ENCODE measurements at regions of chr19 and their contacts with region 1.

Region 1: DNA sequence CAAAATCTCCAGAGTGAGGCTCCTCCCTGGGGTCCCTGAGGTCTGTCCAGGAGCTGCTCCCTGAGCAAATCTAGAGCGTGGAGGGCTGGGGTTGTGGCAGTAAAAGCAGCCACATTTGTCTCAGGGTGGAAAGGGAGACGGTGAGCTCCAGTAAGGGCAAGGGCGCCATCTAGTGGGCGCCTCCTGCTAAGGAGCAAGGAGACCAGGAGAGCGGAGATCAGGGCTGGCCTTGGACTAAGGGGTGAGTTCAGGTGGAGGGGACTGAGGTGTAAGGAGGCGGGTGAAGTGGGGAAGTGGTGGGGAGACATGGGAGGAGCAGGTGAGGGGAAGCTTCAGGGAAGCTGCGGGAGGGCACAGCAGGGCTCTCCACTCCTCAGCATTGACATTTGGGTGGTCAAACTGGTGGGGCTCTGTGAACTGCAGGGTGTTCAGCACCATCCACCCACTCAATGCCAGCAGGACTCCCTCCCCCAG is 5.3 kb upstream of the CEACAM21 start:
- DNase-seq: peak; percentile 66 to 75
- H3K4me3 ChIP-seq: no peak overlapping the region
- H3K27ac ChIP-seq: no peak overlapping the region
- H3K4me1 ChIP-seq: no peaks in the 10 kb centered on the region
- H3K27me3 ChIP-seq: peaks cover 12% of the 10 kb centered on the region
- CTCF ChIP-seq: peak; percentile 50 to 87 (median 68)
- POLR2A ChIP-seq: no peak

Region 2: DNA sequence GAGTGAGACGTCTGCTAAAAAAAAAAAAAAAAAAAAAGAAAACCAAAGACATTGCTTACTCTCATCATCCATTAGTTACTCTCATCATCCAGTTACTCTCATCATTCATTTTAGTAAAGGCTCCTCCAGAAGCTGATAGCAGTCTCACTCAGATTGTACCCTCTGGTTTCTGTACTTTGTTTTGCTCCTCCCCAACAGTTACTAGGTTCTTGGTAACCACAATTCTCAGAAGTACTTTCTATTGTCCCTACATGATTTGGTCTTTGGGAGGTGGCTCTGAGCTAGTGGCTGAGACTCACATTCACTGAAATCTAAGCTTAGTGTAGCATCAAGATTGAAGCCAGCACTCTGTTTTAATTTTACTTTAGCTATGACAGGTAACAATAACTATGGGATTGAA is 113.4 kb before region 1 on chr19:
- intact Hi-C with region 1: loop called (anchors 10 kb)
- DNase-seq: no peak
- H3K4me3 ChIP-seq: no peak overlapping the region
- H3K27ac ChIP-seq: no peak overlapping the region
- H3K4me1 ChIP-seq: peaks cover 0 to 6% of the 10 kb centered on the region in 2 donors
- H3K27me3 ChIP-seq: no peaks in the 10 kb centered on the region
- CTCF ChIP-seq: no peak
- POLR2A ChIP-seq: no peak

Region 3: DNA sequence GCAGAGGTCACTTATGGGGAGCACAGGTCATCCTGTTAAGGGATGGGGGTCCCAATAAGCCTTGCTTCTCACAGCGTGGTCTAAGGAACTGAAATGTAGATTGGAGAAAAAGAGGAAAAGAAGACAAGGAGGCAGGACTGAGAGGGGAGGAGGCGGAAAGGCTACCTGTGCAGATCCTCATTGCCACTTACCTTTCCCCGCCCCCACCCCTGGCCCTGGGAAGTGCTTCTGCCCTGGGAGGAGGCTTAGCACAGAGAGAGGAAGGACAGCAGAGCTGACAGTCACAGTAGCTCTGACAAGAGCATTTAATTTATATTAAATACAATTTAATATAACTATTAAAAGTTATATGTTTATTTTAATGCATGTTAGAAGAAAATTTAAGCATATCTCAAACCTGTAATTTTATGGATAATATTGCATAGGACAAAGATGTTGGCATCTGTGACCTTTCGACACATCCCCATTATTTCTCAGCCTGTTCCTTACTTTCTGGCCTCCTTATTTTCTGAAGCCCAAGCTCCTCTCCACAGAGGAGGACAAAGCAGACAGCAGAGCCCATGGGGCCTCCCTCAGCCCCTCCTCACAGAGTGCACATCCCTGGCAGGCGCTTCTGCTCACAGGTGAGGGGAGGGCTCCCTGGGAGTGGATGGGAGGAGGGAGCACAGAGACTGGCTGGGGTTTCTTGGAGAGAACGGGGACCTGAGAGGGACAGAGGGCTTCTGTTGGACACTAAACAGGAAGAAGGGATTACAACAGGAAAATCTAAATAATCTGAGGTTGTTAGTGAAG is 28.7 kb after region 1 on chr19:
- intact Hi-C with region 1: no loop called
- DNase-seq: no peak
- H3K4me3 ChIP-seq: no peak overlapping the region
- H3K27ac ChIP-seq: no peak overlapping the region
- H3K4me1 ChIP-seq: no peaks in the 10 kb centered on the region
- H3K27me3 ChIP-seq: no peaks in the 10 kb centered on the region
- CTCF ChIP-seq: no peak
- POLR2A ChIP-seq: no peak